A673 (cell line): ENCODE measurements at regions of chr17 and their contacts with region 1.

Region 1: DNA sequence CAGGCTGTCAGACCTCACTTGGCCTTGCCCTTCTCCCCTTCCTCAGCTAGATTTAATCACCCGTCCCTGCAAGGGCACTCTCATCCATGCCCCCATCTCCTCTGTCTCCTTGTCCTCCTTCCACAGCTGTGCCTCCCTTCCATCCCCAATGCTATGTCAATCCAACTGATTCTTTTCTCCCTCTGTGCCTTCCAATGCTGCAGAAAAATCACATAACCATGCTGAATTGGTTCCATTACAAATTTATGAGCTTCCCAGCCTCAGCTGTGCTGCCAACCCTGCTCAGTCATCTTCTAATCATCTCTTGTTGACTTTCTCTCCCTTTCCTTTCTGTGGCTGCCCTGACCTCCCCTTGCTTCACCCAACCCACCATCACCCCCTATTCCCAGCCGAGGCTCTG is 56.3 kb upstream of the PIRT start:
- DNase-seq: no peak
- H3K4me3 ChIP-seq: no peak overlapping the region
- H3K27ac ChIP-seq: no peak overlapping the region
- H3K4me1 ChIP-seq: no peaks in the 10 kb centered on the region
- H3K27me3 ChIP-seq: no peaks in the 10 kb centered on the region
- CTCF ChIP-seq: no peak

Region 2: GRCh38 chr17:9612006-9612405 is 1282.2 kb before region 1 on chr17:
- CTCF ChIA-PET with region 1: no interaction called
- POLR2A ChIA-PET with region 1: no interaction called
- intact Hi-C with region 1: no loop called
- DNase-seq: no peak
- H3K4me3 ChIP-seq: no peak overlapping the region
- H3K27ac ChIP-seq: no peak overlapping the region
- H3K4me1 ChIP-seq: no peaks in the 10 kb centered on the region
- H3K27me3 ChIP-seq: no peaks in the 10 kb centered on the region
- CTCF ChIP-seq: no peak

Region 3: DNA sequence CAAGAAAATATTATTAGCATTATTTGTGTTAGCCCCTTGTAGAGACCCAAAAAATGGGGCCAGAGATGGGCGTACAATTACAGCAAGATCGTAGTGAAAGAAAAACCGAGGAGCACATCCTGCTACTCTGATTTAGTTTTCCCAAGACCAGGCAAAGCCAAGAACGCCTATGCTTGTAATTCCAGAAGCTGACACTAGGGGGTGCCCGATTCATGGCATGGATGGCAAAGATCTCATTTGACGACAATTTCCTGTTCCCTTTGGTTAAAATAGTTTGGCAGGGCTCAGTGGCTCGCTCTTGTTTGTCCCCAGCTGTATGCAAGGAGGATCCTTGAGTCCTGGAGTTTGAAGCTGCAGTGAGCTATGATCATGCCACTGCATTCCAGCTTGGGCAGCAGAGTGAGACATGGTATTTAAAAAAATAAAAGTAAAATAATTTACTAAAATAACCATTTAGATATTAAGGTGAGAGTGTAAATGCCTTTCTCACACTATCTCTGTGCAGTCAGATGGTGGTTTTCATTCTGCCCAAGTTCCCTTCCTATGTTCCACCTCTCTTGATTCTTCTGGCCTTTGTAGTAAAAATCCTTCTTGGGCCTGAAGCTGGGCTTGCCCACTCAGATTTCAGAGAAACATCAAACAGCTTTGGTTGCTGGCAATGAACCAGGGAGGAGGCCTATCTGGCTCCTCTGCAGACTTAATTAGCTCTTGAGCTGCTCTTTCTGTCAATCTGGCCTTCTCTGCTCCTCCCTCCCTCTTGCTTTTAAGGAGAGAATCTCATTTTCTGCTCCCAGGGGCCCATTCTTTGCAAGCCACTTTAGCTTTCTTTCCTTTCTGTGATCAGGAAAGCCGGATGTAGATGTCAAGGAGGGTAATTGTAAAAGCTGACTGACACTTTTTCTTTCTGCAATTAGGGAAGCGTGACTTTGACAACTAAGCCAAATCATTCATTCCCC is 121.5 kb before region 1 on chr17:
- CTCF ChIA-PET with region 1: no interaction called
- POLR2A ChIA-PET with region 1: no interaction called
- intact Hi-C with region 1: no loop called
- DNase-seq: peak; percentile 98
- H3K4me3 ChIP-seq: no peak overlapping the region
- H3K27ac ChIP-seq: no peak overlapping the region
- H3K4me1 ChIP-seq: peaks cover 12% of the 10 kb centered on the region
- H3K27me3 ChIP-seq: peaks cover 77% of the 10 kb centered on the region
- CTCF ChIP-seq: peak; percentile 82

Region 4: DNA sequence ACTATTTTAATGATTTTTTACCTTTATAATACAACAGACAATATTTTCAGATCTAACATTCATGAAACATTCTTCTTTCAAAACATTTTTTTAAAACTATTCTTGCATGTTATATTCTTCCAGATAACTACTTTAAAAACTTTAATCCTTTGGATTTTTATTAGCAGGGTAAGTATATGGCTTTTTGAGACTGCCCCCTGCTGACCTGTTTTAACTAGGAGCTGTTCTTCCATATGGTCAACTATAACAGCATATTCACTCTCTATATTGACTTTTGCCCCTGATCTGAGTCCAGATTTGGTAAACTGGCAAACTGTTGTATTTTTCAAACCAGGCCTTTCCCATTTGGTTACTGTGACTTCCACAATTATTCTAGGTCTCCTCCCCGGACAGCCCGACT is 1086.6 kb after region 1 on chr17:
- CTCF ChIA-PET with region 1: interaction called, 11 read pairs
- POLR2A ChIA-PET with region 1: no interaction called
- intact Hi-C with region 1: no loop called
- DNase-seq: peak; percentile 28
- H3K4me3 ChIP-seq: no peak overlapping the region
- H3K27ac ChIP-seq: no peak overlapping the region
- H3K4me1 ChIP-seq: peaks cover 10% of the 10 kb centered on the region
- H3K27me3 ChIP-seq: no peaks in the 10 kb centered on the region
- CTCF ChIP-seq: peak; percentile 49